ENCODE measurements at regions of chr11 and their contacts with region 1.

Region 1: GRCh38 chr11:48055292-48056132 is 75.2 kb downstream of the PTPRJ start:
- DNase-seq: peak; percentile 16 to 88 (median 52)
- ATAC-seq: peak; percentile 81
- H3K4me3 ChIP-seq: peak overlapping the region; percentile 36
- H3K4me3 Mint-ChIP-seq: peak overlapping the region; percentile 74
- H3K27ac ChIP-seq: peak overlapping the region in 1 of 2 donors; percentile 33
- H3K27ac Mint-ChIP-seq: peak overlapping the region; percentile 88
- H3K4me1 ChIP-seq: peaks cover 86% of the 10 kb centered on the region
- H3K4me1 Mint-ChIP-seq: peaks cover 91% of the 10 kb centered on the region
- H3K27me3 ChIP-seq: no peaks in the 10 kb centered on the region
- H3K27me3 Mint-ChIP-seq: no peaks in the 10 kb centered on the region
- CTCF ChIP-seq: no peak

Region 2: GRCh38 chr11:47514825-47515647 is 540.5 kb before region 1 on chr11:
- CTCF ChIA-PET with region 1: no interaction called
- POLR2A ChIA-PET with region 1: no interaction called
- intact Hi-C with region 1: no loop called
- DNase-seq: peak in 3 of 14 experiments; percentile 28 to 55 (median 46)
- ATAC-seq: peak; percentile 42
- H3K4me3 ChIP-seq: no peak overlapping the region
- H3K4me3 Mint-ChIP-seq: peak overlapping the region; percentile 57
- H3K27ac ChIP-seq: no peak overlapping the region
- H3K27ac Mint-ChIP-seq: peak overlapping the region; percentile 80
- H3K4me1 ChIP-seq: peaks cover 78% of the 10 kb centered on the region
- H3K4me1 Mint-ChIP-seq: peaks cover 79% of the 10 kb centered on the region
- H3K27me3 ChIP-seq: no peaks in the 10 kb centered on the region
- H3K27me3 Mint-ChIP-seq: no peaks in the 10 kb centered on the region
- CTCF ChIP-seq: no peak

Region 3: DNA sequence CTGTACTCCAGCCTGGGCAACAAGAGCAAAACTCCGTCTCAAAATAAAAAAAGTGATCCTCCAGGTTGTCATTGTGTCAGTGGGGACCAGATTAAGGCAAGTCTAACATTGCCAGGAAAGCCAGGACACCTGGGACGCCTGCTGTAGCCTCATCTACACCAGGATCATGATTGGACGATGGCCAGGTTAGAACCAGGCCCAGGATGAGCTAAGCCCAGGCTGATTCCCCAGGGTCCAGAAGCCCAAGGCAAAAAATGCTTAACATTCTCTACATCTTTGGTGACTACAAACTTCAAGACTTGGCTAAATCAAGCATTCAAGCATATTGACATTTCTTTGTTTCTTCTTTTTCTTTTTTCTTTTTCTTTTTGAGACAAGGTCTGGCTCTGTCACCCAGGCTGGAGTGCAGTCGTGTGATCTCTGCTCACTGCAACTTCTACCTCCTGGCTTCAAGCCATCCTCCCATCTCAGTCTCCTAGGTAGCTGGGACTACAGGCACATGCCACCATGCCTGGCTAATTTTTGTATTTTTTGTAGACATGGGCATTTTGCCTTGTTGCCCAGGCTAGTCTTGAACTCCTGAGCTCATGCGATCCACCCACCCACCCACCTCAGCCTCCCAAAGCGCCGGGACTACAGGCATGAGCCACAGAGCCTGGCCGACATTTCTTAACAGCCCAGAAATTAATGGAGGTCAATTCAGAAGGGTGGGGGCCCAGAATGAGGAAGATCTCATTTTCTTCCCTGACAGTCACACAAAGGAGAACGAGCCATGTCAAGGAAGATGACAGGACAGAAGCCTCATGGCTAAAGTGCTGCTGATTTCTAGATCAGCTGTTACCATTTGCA is 87.7 kb before region 1 on chr11:
- CTCF ChIA-PET with region 1: no interaction called
- POLR2A ChIA-PET with region 1: no interaction called
- intact Hi-C with region 1: no loop called
- DNase-seq: no peak
- ATAC-seq: no peak
- H3K4me3 ChIP-seq: no peak overlapping the region
- H3K4me3 Mint-ChIP-seq: no peak overlapping the region
- H3K27ac ChIP-seq: no peak overlapping the region
- H3K27ac Mint-ChIP-seq: no peak overlapping the region
- H3K4me1 ChIP-seq: no peaks in the 10 kb centered on the region
- H3K4me1 Mint-ChIP-seq: no peaks in the 10 kb centered on the region
- H3K27me3 ChIP-seq: no peaks in the 10 kb centered on the region
- H3K27me3 Mint-ChIP-seq: no peaks in the 10 kb centered on the region
- CTCF ChIP-seq: no peak

Region 4: DNA sequence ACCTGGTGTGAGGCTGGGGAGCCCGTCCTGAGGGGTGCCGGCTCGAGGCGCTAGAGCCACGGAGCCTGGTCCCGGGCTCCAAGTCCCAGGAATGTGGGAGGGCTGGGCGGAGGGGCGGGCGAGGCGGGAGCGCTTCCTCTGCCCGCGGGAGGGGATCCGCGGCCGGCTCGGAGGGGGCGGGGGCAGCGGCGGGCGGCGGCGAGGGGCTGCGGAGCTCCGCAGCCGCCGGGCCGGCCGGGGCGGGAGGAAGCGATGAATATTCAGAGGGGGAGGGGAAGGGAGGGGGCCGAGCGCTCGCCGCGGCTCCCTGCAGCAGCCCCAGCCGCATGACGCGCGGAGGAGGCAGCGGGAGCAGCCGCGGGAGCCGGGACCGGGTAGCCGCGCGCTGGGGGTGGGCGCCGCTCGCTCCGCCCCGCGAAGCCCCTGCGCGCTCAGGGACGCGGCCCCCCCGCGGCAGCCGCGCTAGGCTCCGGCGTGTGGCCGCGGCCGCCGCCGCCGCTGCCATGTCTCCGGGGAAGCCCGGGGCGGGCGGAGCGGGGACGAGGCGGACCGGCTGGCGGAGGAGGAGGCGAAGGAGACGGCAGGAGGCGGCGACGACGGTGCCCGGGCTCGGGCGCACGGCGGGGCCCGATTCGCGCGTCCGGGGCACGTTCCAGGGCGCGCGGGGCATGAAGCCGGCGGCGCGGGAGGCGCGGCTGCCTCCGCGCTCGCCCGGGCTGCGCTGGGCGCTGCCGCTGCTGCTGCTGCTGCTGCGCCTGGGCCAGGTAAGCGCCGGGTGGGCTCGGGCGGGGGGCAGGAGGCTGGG is 75.1 kb before region 1 on chr11 and contains the start of gene PTPRJ:
- CTCF ChIA-PET with region 1: interaction called, 3 read pairs
- POLR2A ChIA-PET with region 1: interaction called, 41 read pairs
- intact Hi-C with region 1: loop called (anchors 5 kb)
- DNase-seq: peak; percentile 36 to 88 (median 57)
- ATAC-seq: peak; percentile 68
- H3K4me3 ChIP-seq: peak within 1 kb of the TSS; percentile 70
- H3K4me3 Mint-ChIP-seq: peak within 1 kb of the TSS; percentile 98
- H3K27ac ChIP-seq: peak within 1 kb of the TSS in 1 of 2 donors; percentile 41
- H3K27ac Mint-ChIP-seq: peak within 1 kb of the TSS; percentile 91
- H3K4me1 ChIP-seq: peaks cover 39% of the 10 kb centered on the region
- H3K4me1 Mint-ChIP-seq: peaks cover 38% of the 10 kb centered on the region
- H3K27me3 ChIP-seq: no peaks in the 10 kb centered on the region
- H3K27me3 Mint-ChIP-seq: no peaks in the 10 kb centered on the region
- CTCF ChIP-seq: no peak
- total RNA-seq, gene PTPRJ: 26.6 to 28.9 TPM

Region 5: DNA sequence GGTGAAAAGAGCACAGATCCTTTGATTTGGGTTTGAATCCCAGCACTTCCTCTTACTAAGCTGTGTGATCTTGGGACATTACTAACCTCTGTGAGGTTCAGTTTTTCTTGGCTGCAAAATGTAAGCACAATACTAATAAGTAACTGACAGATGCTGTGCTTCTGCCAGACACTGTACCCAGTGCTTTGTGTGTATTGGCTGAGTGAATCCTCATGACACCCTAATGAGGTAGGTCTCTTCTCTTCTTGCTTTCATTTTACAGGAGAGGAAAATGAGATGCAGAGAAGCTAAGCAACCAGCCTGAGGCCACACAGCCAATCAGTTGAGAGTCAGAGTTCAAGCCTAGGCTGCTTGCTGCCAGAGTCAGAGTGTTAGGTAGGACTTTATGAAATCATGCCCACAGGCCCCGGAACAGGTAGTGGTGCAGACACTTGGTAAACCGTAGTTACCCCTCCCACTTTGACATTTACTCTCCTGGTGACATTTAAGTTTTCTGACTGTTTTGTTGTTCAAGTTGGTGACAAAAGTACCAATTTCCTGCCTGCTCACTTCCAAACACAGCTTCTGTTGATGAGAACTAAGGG is 54.0 kb before region 1 on chr11:
- CTCF ChIA-PET with region 1: interaction called, 3 read pairs
- POLR2A ChIA-PET with region 1: interaction called, 125 read pairs
- intact Hi-C with region 1: loop called (anchors 1 to 5 kb)
- DNase-seq: peak; percentile 68 to 97 (median 78)
- ATAC-seq: peak; percentile 90
- H3K4me3 ChIP-seq: peak overlapping the region; percentile 24
- H3K4me3 Mint-ChIP-seq: peak overlapping the region; percentile 74
- H3K27ac ChIP-seq: peak overlapping the region; percentile 63 to 74
- H3K27ac Mint-ChIP-seq: peak overlapping the region; percentile 93
- H3K4me1 ChIP-seq: peaks cover 92% of the 10 kb centered on the region
- H3K4me1 Mint-ChIP-seq: peaks cover 91% of the 10 kb centered on the region
- H3K27me3 ChIP-seq: no peaks in the 10 kb centered on the region
- H3K27me3 Mint-ChIP-seq: no peaks in the 10 kb centered on the region
- CTCF ChIP-seq: no peak

Region 6: GRCh38 chr11:48020092-48020755 is 35.3 kb before region 1 on chr11:
- CTCF ChIA-PET with region 1: interaction called, 7 read pairs
- POLR2A ChIA-PET with region 1: interaction called, 29 read pairs
- intact Hi-C with region 1: loop called in 1 of 2 experiments (anchors 5 kb)
- DNase-seq: peak in 4 of 14 experiments; percentile 24 to 84 (median 75)
- ATAC-seq: peak; percentile 43
- H3K4me3 ChIP-seq: peak overlapping the region; percentile 6
- H3K4me3 Mint-ChIP-seq: peak overlapping the region; percentile 71
- H3K27ac ChIP-seq: peak overlapping the region; percentile 0 to 68
- H3K27ac Mint-ChIP-seq: peak overlapping the region; percentile 90
- H3K4me1 ChIP-seq: peaks cover 60% of the 10 kb centered on the region
- H3K4me1 Mint-ChIP-seq: peaks cover 74% of the 10 kb centered on the region
- H3K27me3 ChIP-seq: no peaks in the 10 kb centered on the region
- H3K27me3 Mint-ChIP-seq: no peaks in the 10 kb centered on the region
- CTCF ChIP-seq: no peak

Region 7: DNA sequence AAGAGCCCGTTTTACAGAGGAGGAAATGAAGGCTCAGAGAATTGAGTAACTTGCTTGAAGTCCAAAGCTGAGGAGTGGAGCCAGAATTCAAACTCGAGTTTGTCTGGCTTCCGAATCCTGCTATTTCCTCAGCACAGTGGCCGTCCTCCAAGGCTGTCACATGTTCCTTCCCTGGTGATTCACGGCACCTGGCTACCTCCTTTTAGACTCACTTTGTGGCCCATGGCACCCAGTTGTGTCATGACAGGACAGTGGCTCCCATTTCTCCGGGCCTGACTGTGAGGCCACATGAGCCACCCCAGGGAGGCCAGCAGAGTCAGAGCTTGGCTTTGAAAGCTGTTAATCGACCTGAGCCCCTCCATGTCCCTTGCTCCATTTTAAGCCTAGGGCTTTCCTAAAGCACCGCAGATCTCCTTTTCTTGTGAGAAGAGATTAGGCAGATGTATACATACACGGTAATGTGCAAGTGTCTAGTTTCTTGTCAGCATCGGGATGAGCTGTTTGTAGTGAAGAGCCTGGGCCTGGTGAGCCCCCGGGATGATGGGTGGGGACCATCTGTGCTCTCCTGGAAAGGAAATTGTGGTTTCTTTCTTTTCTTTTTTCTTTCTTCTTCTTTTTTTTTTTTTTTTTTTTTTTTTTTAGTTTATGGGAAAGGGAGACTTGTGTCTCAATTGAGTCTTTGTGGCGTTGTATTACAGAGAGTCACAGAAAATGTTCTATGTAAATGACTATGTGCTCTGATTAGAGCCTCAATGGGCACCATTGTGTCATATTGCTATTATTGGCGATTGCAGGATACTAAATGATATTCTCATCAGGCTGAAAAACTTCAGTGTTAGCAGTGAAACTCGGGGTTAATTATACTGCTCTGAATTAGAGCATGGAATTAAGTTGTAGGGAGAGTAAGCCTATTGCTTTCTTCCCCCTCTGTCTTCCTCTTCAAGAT is 20.3 kb before region 1 on chr11:
- CTCF ChIA-PET with region 1: no interaction called
- POLR2A ChIA-PET with region 1: interaction called, 20 read pairs
- intact Hi-C with region 1: no loop called
- DNase-seq: no peak
- ATAC-seq: no peak
- H3K4me3 ChIP-seq: no peak overlapping the region
- H3K4me3 Mint-ChIP-seq: peak overlapping the region; percentile 8
- H3K27ac ChIP-seq: no peak overlapping the region
- H3K27ac Mint-ChIP-seq: peak overlapping the region; percentile 66
- H3K4me1 ChIP-seq: peaks cover 48% of the 10 kb centered on the region
- H3K4me1 Mint-ChIP-seq: peaks cover 80% of the 10 kb centered on the region
- H3K27me3 ChIP-seq: no peaks in the 10 kb centered on the region
- H3K27me3 Mint-ChIP-seq: no peaks in the 10 kb centered on the region
- CTCF ChIP-seq: no peak

Region 8: DNA sequence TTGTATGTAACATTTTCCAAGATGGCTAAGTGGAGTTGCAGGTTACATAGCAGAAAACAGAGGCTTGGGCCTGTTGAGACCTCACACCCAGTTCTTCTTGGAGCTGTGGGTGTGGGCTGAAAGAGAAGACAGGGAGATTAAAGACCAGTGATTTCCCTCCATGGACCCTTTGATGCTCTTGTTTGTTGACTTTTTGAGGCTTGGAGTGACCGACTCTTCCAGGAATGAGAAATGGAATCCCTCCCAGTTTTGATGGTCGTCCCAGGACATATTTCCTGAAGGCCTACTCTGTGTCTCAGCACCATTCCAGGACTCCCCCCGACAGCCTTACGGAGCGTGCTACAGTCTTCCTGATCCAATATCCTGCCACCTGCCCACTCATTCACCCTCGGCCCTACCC is 21.7 kb after region 1 on chr11:
- CTCF ChIA-PET with region 1: no interaction called
- POLR2A ChIA-PET with region 1: interaction called, 10 read pairs
- intact Hi-C with region 1: no loop called
- DNase-seq: no peak
- ATAC-seq: no peak
- H3K4me3 ChIP-seq: no peak overlapping the region
- H3K4me3 Mint-ChIP-seq: no peak overlapping the region
- H3K27ac ChIP-seq: no peak overlapping the region
- H3K27ac Mint-ChIP-seq: no peak overlapping the region
- H3K4me1 ChIP-seq: peaks cover 28% of the 10 kb centered on the region
- H3K4me1 Mint-ChIP-seq: peaks cover 50% of the 10 kb centered on the region
- H3K27me3 ChIP-seq: no peaks in the 10 kb centered on the region
- H3K27me3 Mint-ChIP-seq: no peaks in the 10 kb centered on the region
- CTCF ChIP-seq: no peak

Region 9: DNA sequence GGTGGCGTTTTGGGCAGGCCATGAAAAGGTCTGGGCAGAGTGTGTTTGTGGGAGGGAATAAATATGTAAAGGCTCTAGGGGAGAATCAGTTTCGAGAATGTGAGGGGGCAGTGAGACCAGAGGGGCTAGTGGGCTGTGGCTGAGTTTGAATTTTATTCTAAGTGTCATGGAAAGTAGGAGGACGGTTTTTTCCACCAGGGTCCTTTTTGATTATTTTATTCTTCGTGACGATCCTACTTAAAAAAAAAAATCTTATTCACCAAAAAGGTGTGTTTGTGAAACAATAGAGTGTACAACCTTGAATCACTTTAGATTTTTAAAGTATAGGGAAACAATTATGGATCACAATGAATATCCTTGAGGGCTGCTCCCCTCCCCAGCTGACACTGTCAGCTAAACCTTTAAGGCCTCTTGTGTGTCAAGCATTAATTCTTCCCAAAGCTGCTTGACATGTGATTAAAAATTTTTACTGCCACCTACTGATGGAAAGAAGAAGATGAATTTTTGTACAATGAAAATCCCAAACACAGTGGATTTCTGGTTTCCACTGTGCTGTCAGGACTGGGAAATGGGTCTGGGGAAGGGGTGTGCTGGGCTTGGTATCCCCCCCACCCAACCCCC is 53.6 kb after region 1 on chr11:
- CTCF ChIA-PET with region 1: interaction called, 6 read pairs
- POLR2A ChIA-PET with region 1: interaction called, 38 read pairs
- intact Hi-C with region 1: loop called (anchors 2 to 5 kb)
- DNase-seq: peak in 3 of 14 experiments; percentile 63 to 65 (median 64)
- ATAC-seq: peak; percentile 45
- H3K4me3 ChIP-seq: peak overlapping the region; percentile 45
- H3K4me3 Mint-ChIP-seq: peak overlapping the region; percentile 25
- H3K27ac ChIP-seq: peak overlapping the region in 1 of 2 donors; percentile 45
- H3K27ac Mint-ChIP-seq: peak overlapping the region; percentile 60
- H3K4me1 ChIP-seq: peaks cover 52% of the 10 kb centered on the region
- H3K4me1 Mint-ChIP-seq: peaks cover 51% of the 10 kb centered on the region
- H3K27me3 ChIP-seq: no peaks in the 10 kb centered on the region
- H3K27me3 Mint-ChIP-seq: no peaks in the 10 kb centered on the region
- CTCF ChIP-seq: no peak